Right ventricle myocardium inferior (tissue), 1 donor: ENCODE measurements at regions of chr2 and their contacts with region 1.

Region 1: DNA sequence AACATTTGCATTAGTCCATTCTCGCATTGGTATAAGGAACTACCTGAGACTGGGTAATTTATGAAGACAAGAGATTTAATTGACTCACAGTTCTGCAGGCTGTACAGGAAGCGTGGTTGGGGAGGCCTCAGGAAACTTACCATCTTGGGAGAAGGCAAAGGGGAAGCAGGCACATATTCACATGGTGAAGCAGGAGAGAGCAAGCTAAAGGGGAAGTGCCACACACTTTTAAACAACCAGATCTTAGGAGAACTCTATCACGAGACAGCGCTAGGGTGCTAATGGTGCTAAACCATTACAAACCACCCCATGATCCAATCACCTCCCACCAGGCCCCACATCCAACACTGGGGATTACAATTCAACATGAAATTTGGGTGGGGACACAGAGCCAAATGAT is 201.7 kb upstream of the MGAT5 start:
- DNase-seq: no peak
- ATAC-seq: no peak

Region 2: DNA sequence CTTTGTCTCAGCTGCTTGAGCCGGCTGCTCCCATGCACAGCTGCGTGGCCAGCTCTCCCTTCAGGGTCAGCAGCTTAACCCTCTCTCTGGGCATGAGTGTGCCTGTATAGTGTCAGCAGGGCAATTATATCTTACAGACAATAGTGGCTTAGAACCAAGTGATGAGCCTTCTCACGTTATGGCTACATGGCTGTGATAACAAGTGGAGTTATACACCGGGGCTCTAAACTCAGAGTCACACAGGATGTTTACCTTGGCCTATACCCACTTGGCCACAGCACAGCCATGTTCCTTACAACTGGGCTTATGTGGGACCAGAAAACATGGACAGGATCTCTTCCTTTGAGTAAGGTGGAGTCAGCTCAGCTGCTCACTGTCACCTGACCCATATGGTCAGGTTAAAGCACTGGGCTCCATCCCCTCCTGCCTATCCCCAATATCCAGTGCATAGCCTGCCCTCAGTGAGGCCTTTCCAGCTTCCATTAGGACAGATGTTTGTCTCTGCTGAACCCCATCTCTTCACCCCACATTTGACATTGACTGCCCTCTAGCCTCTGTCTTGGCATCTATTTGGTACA is 189.7 kb before region 1 on chr2:
- intact Hi-C with region 1: no loop called
- DNase-seq: no peak
- ATAC-seq: no peak

Region 3: GRCh38 chr2:133941666-133942065 is 110.5 kb before region 1 on chr2:
- intact Hi-C with region 1: no loop called
- DNase-seq: no peak
- ATAC-seq: no peak

Region 4: DNA sequence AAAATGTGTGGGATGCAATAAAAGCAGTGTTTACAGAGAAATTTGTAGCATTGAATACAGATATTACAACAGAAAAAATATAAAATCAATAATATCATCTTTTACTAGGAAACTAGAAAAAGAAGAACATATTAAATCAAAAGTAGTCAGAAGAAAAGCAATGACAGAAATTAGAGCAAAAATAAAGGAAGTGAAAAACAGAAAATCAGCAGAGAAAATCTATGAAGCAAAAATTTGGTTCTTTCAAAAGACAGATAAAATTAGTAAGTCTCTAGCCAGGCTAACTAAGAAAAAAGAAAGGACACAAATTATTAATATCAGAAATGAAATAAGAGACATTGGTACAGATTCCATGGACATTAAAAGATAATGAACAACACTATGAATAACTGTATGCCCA is 10.3 kb before region 1 on chr2:
- intact Hi-C with region 1: loop called (anchors 1 kb)
- DNase-seq: no peak
- ATAC-seq: no peak